ENCODE measurements at regions of chr5 and their contacts with region 1.

Region 1: GRCh38 chr5:172188033-172188892 is at the start of gene STK10:
- DNase-seq: peak; percentile 95
- H3K4me3 Mint-ChIP-seq: peak within 1 kb of the TSS; percentile 87
- H3K27ac Mint-ChIP-seq: peak within 1 kb of the TSS; percentile 43
- H3K4me1 Mint-ChIP-seq: peaks cover 24% of the 10 kb centered on the region
- H3K27me3 Mint-ChIP-seq: no peaks in the 10 kb centered on the region
- CTCF ChIP-seq: peak; percentile 98
- total RNA-seq, gene STK10: 46.5 and 49.9 TPM in 2 replicates

Region 2: GRCh38 chr5:171857489-171857876 is 330.8 kb before region 1 on chr5:
- CTCF ChIA-PET with region 1: no interaction called
- POLR2A ChIA-PET with region 1: no interaction called
- intact Hi-C with region 1: no loop called
- DNase-seq: no peak
- H3K4me3 Mint-ChIP-seq: no peak overlapping the region
- H3K27ac Mint-ChIP-seq: no peak overlapping the region
- H3K4me1 Mint-ChIP-seq: peaks cover 6% of the 10 kb centered on the region
- H3K27me3 Mint-ChIP-seq: no peaks in the 10 kb centered on the region
- CTCF ChIP-seq: no peak

Region 3: GRCh38 chr5:172006321-172007174 is 181.7 kb before region 1 on chr5 and contains the start of gene FBXW11:
- CTCF ChIA-PET with region 1: interaction called, 18 read pairs
- POLR2A ChIA-PET with region 1: interaction called, 38 read pairs
- intact Hi-C with region 1: loop called (anchors 1 kb)
- DNase-seq: peak; percentile 99
- H3K4me3 Mint-ChIP-seq: peak within 1 kb of the TSS; percentile 90
- H3K27ac Mint-ChIP-seq: peak within 1 kb of the TSS; percentile 95
- H3K4me1 Mint-ChIP-seq: peaks cover 51% of the 10 kb centered on the region
- H3K27me3 Mint-ChIP-seq: no peaks in the 10 kb centered on the region
- CTCF ChIP-seq: no peak
- total RNA-seq, gene FBXW11: 64.7 and 82.7 TPM in 2 replicates

Region 4: GRCh38 chr5:172059661-172060100 is 128.6 kb before region 1 on chr5:
- CTCF ChIA-PET with region 1: interaction called, 10 read pairs
- POLR2A ChIA-PET with region 1: no interaction called
- intact Hi-C with region 1: loop called (anchors 5 kb)
- DNase-seq: peak; percentile 30
- H3K4me3 Mint-ChIP-seq: no peak overlapping the region
- H3K27ac Mint-ChIP-seq: no peak overlapping the region
- H3K4me1 Mint-ChIP-seq: no peaks in the 10 kb centered on the region
- H3K27me3 Mint-ChIP-seq: no peaks in the 10 kb centered on the region
- CTCF ChIP-seq: peak; percentile 64

Region 5: GRCh38 chr5:172175263-172175719 is 13.0 kb before region 1 on chr5:
- CTCF ChIA-PET with region 1: interaction called, 69 read pairs
- POLR2A ChIA-PET with region 1: interaction called, 19 read pairs
- intact Hi-C with region 1: loop called (anchors 1 kb)
- DNase-seq: no peak
- H3K4me3 Mint-ChIP-seq: no peak overlapping the region
- H3K27ac Mint-ChIP-seq: no peak overlapping the region
- H3K4me1 Mint-ChIP-seq: peaks cover 32% of the 10 kb centered on the region
- H3K27me3 Mint-ChIP-seq: no peaks in the 10 kb centered on the region
- CTCF ChIP-seq: no peak

Region 6: GRCh38 chr5:172213126-172213525 is 24.9 kb after region 1 on chr5:
- CTCF ChIA-PET with region 1: interaction called, 17 read pairs
- POLR2A ChIA-PET with region 1: interaction called, 3 read pairs
- intact Hi-C with region 1: no loop called
- DNase-seq: no peak
- H3K4me3 Mint-ChIP-seq: no peak overlapping the region
- H3K27ac Mint-ChIP-seq: no peak overlapping the region
- H3K4me1 Mint-ChIP-seq: peaks cover 9% of the 10 kb centered on the region
- H3K27me3 Mint-ChIP-seq: no peaks in the 10 kb centered on the region
- CTCF ChIP-seq: no peak

Region 7: GRCh38 chr5:172454358-172455086 is 266.3 kb after region 1 on chr5 and contains the start of gene SH3PXD2B:
- CTCF ChIA-PET with region 1: no interaction called
- POLR2A ChIA-PET with region 1: interaction called, 3 read pairs
- intact Hi-C with region 1: loop called (anchors 5 kb)
- DNase-seq: peak; percentile 68
- H3K4me3 Mint-ChIP-seq: peak within 1 kb of the TSS; percentile 91
- H3K27ac Mint-ChIP-seq: peak within 1 kb of the TSS; percentile 90
- H3K4me1 Mint-ChIP-seq: peaks cover 44% of the 10 kb centered on the region
- H3K27me3 Mint-ChIP-seq: no peaks in the 10 kb centered on the region
- CTCF ChIP-seq: no peak
- total RNA-seq, gene SH3PXD2B: 34.1 and 42.3 TPM in 2 replicates